ENCODE measurements at regions of chr2 and their contacts with region 1.

Region 1: DNA sequence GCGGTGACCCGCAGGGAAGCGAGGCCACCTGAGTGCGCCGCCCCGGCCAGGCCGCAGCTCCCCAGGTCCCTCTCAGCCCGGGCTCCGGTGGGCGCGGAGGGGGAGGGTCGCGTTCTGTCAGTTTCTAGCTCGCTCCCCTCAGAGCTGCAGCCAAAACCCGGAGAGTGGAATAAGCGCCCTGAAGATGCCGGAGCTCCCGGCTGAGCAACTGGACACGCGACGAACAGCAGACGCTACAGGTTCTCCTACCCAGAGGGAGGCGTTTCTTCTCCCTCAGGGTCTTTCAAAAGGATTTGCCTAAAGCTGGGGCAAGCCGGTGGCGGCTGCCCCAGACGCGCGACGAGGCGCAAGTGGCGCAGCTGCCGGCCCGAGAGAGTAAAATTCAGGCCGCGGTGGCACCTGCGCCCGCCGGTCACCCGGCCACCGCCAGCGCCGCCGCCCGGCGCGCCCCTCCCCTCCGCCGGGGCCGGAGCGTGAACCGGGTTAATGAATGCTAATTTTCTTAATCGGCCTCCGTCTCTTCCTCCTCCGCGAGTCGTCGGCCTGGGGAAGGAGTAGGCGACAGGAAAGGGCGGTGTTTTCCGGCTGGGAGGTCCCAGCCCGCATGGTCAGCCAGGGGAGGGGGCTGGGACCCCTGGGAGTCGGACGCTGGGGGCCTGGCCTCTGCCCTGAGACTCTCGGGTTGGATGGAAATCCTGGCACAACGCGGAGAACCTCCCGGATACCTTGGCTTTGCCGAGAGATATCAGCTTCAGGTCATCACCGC is 845 bp upstream of the CDC42EP3 start:
- DNase-seq: peak; percentile 90

Region 2: GRCh38 chr2:37653805-37654378 is 18.4 kb before region 1 on chr2:
- intact Hi-C with region 1: loop called (anchors 1 kb)
- DNase-seq: peak; percentile 87

Region 3: DNA sequence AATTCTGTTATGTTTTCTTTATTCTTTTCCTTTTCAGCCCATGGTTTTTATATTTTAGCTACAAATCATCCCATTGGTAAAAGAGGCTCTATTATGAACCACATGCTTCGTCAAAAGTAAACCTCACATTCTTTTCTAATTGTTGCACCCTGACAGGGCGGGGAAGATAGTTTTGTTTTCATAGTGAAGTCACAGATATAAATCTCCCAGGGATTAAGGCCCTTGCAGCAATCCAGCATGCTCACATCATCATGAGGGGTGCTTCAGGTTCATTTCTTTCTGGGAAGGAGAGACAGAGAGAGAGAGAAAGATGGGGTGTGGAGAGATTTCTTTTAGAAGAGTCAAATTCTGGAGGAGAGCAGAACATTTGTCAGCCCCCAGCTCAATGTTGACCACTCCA is 123.7 kb after region 1 on chr2:
- intact Hi-C with region 1: loop called (anchors 10 kb)
- DNase-seq: no peak

Region 4: DNA sequence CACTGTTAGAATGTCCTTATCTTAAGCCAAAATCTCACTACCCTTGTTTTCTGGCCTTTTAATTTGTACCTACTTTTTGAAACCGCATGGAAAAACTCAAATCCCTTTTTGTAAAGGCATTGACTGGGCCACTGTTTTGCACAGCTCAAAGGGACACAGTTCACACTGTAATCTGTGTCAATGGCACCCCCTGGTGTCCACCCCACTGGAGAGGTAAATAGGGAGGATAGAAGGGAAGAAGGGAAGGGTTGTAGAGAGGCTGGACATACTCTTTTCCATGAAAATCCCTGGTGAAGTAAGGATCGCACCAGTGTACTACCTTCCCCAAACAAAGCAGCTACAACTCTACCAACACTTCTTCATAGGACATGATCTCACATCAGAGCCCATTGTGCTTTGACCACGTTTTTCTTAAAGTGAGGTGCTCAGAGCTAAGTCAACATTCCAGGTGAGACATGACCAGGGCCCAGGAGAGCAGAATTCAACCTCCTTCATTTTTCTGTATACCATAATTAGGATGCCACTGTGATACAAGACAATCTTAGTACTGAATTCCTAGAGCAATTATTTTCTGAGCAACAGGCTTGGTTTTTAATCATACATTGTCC is 160.4 kb after region 1 on chr2:
- intact Hi-C with region 1: loop called (anchors 5 kb)
- DNase-seq: peak; percentile 91